ENCODE measurements at regions of chr11 and their contacts with region 1.

Region 1: GRCh38 chr11:11787305-11788062 is 54.3 kb upstream of the USP47 start:
- DNase-seq: peak; percentile 87

Region 2: GRCh38 chr11:10792398-10792975 is 995.0 kb before region 1 on chr11:
- intact Hi-C with region 1: loop called in 1 of 2 experiments (anchors 5 kb)
- DNase-seq: peak; percentile 97

Region 3: GRCh38 chr11:10933455-10934292 is 853.8 kb before region 1 on chr11:
- intact Hi-C with region 1: loop called in 1 of 2 experiments (anchors 10 kb)
- DNase-seq: peak; percentile 96

Region 4: DNA sequence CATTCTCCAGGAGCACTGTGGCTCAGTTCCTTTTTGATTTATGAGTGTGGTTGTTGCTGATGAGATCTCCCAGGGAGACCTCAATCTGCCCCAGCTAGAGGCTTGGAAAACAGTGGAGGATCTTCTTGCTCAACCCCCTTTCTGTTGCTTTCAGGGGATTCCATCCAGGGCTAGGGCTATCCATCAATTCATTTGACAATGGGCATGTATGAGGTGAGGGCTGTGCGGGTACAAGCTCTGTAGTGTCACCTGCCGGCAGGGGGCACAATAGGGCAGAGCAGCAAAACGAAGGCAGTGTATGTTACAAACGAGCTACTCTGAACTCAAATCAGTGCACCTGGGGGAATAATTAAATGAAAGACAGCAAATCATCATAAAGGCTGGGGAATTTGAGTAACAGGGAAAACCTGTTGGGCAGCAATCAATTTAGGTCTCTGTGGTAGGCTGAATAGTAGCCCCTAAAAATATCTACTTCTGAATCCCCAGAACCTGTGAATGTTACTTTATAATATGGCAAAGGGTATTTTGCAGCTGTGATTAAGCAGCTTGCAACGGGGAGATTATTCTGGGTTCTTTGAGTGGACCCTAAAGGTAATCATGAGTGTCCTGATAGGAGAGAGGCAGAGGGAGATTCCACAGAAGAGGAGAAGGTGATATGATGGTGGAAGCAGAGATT is 759.3 kb before region 1 on chr11:
- intact Hi-C with region 1: loop called in 1 of 2 experiments (anchors 10 kb)
- DNase-seq: peak; percentile 86

Region 5: DNA sequence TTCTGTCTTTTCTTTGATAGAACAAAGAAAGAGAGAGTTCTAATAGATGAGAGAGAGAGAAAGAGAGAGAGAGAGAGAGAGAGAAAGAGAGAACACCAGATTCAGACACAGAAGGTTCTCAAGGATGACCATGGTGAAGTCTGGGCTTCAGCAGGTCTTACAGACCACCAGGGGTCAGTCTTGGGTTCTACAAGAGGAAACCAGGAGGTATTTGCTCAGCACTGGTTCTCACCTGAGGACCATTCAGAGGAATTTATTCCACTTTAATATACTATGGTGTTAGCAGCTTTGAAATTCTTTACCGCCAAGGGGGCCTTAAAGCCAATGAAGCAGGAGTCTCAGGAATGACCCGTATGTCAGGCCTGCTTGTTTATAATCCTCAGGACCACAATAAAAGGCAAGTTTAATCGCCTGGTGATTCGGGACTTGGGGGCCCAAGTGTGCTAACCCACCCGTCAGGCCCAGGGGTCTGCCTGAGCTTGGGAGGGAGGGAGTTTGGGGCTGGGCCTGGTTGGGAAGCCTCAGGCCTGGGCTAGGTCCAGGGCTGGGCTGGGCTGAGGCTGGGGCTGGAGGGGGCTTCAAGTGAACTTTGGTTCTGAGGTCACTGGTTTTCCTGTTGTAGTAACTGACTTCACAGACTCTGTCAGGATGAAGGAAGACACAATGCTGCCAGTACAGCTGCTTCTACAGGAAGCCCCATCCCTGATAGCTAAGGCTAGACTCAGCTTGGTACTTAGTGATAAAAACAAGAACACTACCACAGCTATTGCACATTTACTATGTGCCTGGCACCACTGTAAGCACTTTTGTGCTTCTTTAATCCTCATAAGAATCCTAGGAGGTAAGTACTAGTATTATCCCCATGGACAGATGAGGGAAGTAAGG is 750.4 kb before region 1 on chr11:
- intact Hi-C with region 1: loop called in 1 of 2 experiments (anchors 5 kb)
- DNase-seq: no peak

Region 6: GRCh38 chr11:11621573-11622319 is 165.7 kb before region 1 on chr11 and contains the start of gene GALNT18:
- intact Hi-C with region 1: loop called in 1 of 2 experiments (anchors 5 kb)
- DNase-seq: peak; percentile 96
- total RNA-seq, gene GALNT18: 21.4 to 28.0 TPM

Region 7: GRCh38 chr11:11635443-11635842 is 152.0 kb before region 1 on chr11:
- intact Hi-C with region 1: no loop called
- DNase-seq: no peak

Region 8: GRCh38 chr11:11841723-11842420 is 54.4 kb after region 1 on chr11 and contains the start of gene USP47:
- intact Hi-C with region 1: no loop called
- DNase-seq: peak; percentile 98
- total RNA-seq, gene USP47: 49.4 to 57.8 TPM

Measured in posterior vena cava (tissue), 2 donors.